Dendritic cell treated with granulocyte-macrophage colony-stimulating factor and Interleukin-4, amounts not matched to agents 40 ng/mL and 50 ng/mL, for 4 days (primary cell): ENCODE measurements at regions of chr4 and their contacts with region 1.

Region 1: GRCh38 chr4:143025081-143025704 is 159.5 kb upstream of the USP38 start:
- H3K4me3 Mint-ChIP-seq: no peak overlapping the region
- H3K27ac Mint-ChIP-seq: peak overlapping the region; percentile 10
- H3K4me1 Mint-ChIP-seq: peaks cover 56% of the 10 kb centered on the region
- H3K27me3 Mint-ChIP-seq: no peaks in the 10 kb centered on the region

Region 2: DNA sequence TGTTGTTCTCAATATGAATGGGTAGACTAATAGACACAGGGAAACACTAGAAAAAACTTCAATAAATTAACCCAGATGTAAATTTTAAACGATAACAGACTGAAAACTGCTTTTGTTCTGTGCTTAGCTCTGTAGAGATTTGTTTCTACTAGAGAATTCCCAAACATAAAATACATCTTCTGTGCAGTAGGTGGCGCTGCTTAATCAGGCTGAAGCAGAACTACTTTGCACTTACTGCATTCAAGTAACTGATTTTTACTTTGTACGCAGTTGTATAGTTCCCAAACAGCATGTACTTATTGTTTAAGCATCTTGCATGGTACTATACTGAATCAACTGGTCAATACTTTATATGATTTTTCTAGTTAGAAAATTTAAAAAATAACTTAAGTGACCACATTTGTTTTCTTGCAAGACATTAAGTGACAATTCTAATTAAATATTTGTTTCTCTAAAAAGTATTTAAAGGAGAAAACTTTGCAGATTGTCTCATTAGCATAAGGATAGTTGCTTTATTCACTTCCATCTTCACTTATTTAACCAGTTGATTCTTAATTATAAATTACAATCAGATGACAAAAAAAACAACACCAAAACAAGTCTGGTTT is 898.2 kb before region 1 on chr4:
- intact Hi-C with region 1: loop called (anchors 1 kb)
- H3K4me3 Mint-ChIP-seq: no peak overlapping the region
- H3K27ac Mint-ChIP-seq: no peak overlapping the region
- H3K4me1 Mint-ChIP-seq: peaks cover 9% of the 10 kb centered on the region
- H3K27me3 Mint-ChIP-seq: no peaks in the 10 kb centered on the region

Region 3: GRCh38 chr4:142282870-142283431 is 742.2 kb before region 1 on chr4:
- intact Hi-C with region 1: loop called (anchors 1 kb)
- H3K4me3 Mint-ChIP-seq: no peak overlapping the region
- H3K27ac Mint-ChIP-seq: no peak overlapping the region
- H3K4me1 Mint-ChIP-seq: peaks cover 6% of the 10 kb centered on the region
- H3K27me3 Mint-ChIP-seq: no peaks in the 10 kb centered on the region

Region 4: DNA sequence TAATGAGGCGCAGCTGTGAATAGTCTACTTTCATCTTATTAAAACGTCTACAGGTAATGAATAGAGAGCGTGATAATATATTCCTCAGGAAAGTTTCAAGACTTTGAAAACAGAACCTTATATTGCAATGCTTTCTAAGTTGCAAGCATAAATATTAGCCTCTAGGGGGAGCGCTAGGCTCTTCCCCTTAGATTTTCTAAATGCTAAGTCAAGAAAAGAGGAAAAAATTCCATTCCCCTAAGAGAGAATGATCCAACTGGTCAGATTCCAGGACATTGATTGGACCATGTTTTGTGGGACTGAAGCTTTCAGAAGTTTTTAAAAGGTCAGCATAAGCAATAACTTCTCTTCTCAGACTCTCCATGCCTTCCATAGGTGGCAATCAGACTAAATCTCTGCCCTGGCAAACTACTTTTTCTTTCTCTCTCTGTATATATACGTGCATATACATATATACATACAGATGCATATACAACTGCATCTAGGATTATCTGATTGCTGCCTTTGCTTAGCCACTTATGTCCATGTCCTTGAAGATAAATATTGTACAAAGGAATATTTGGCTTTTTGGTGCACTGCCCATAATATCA is 671.9 kb before region 1 on chr4:
- intact Hi-C with region 1: loop called (anchors 2 kb)
- H3K4me3 Mint-ChIP-seq: no peak overlapping the region
- H3K27ac Mint-ChIP-seq: no peak overlapping the region
- H3K4me1 Mint-ChIP-seq: peaks cover 6% of the 10 kb centered on the region
- H3K27me3 Mint-ChIP-seq: no peaks in the 10 kb centered on the region

Region 5: GRCh38 chr4:142883040-142883832 is 142.0 kb before region 1 on chr4:
- intact Hi-C with region 1: loop called (anchors 5 kb)
- H3K4me3 Mint-ChIP-seq: no peak overlapping the region
- H3K27ac Mint-ChIP-seq: no peak overlapping the region
- H3K4me1 Mint-ChIP-seq: no peaks in the 10 kb centered on the region
- H3K27me3 Mint-ChIP-seq: no peaks in the 10 kb centered on the region

Region 6: DNA sequence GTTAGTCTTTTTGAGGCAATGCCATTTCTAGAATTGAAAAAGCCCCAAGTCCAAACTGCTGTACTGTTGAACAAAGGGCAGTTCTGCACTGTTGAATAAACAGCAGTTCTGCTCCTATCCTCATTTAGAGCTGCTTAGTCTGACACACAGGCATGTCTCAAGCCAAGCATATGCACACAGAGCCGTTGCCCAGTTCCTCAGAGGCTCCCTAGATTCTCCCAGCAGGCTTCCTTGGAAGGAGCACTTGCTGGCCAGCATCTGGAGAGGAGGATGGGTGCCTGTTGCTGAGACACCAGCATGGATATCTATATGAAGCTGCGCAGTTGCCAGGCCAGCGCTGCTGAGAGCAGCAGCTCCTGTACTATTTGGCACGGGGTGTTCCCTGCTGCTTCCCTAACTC is 21.3 kb after region 1 on chr4:
- intact Hi-C with region 1: no loop called
- H3K4me3 Mint-ChIP-seq: no peak overlapping the region
- H3K27ac Mint-ChIP-seq: no peak overlapping the region
- H3K4me1 Mint-ChIP-seq: peaks cover 9% of the 10 kb centered on the region
- H3K27me3 Mint-ChIP-seq: no peaks in the 10 kb centered on the region

Region 7: DNA sequence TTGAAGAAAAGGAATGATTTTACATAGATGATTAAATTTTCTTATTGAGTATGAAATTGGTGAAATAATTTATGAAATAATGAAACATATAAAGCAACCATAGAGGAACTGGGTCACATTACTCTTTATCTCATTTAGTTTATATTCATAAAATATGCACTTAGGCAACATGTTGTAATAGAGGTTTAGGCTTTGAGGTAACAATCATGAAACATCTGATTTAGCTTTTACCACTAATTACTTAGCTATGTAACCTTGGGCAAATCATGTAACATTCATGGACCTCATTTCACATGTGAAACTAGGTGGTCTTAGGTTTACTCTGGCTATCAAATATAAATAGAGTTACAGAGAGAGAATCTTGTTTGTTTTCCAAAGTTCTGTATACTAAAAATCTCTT is 433.8 kb after region 1 on chr4:
- intact Hi-C with region 1: no loop called
- H3K4me3 Mint-ChIP-seq: no peak overlapping the region
- H3K27ac Mint-ChIP-seq: no peak overlapping the region
- H3K4me1 Mint-ChIP-seq: no peaks in the 10 kb centered on the region
- H3K27me3 Mint-ChIP-seq: no peaks in the 10 kb centered on the region